GM23248 (cell line): ENCODE measurements at regions of chr4 and their contacts with region 1.

Region 1: DNA sequence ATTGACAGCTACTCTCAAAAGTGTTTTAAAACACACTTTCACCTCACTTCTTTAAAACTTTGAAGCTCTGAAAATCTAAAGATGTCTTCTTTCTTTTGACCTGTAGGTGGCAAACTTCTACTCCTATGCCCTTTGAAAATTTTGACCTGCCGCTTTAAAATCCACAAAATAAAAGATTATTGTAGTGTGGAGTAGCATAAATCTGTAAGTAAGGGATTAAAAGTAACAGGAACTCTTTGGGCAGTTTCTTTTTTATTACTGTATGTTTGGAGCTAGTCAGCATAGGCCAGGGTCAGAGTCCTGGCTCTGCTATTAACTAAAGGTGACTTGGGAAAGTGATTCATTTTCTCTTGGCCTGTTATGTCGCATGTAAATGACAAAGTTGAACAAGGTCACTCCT is 25.5 kb downstream of the BBS12 start:
- DNase-seq: peak; percentile 69
- H3K4me3 ChIP-seq: peak overlapping the region; percentile 54
- H3K27ac ChIP-seq: peak overlapping the region; percentile 36
- H3K4me1 ChIP-seq: peaks cover 50% of the 10 kb centered on the region
- H3K27me3 ChIP-seq: no peaks in the 10 kb centered on the region

Region 2: GRCh38 chr4:122329876-122330565 is 428.0 kb before region 1 on chr4:
- in situ Hi-C with region 1: no loop called
- DNase-seq: peak; percentile 58
- H3K4me3 ChIP-seq: no peak overlapping the region
- H3K27ac ChIP-seq: peak overlapping the region; percentile 70
- H3K4me1 ChIP-seq: peaks cover 12% of the 10 kb centered on the region
- H3K27me3 ChIP-seq: no peaks in the 10 kb centered on the region

Region 3: GRCh38 chr4:122854447-122855352 is 96.7 kb after region 1 on chr4:
- in situ Hi-C with region 1: no loop called
- DNase-seq: peak; percentile 58
- H3K4me3 ChIP-seq: peak overlapping the region; percentile 40
- H3K27ac ChIP-seq: peak overlapping the region; percentile 70
- H3K4me1 ChIP-seq: peaks cover 83% of the 10 kb centered on the region
- H3K27me3 ChIP-seq: no peaks in the 10 kb centered on the region

Region 4: DNA sequence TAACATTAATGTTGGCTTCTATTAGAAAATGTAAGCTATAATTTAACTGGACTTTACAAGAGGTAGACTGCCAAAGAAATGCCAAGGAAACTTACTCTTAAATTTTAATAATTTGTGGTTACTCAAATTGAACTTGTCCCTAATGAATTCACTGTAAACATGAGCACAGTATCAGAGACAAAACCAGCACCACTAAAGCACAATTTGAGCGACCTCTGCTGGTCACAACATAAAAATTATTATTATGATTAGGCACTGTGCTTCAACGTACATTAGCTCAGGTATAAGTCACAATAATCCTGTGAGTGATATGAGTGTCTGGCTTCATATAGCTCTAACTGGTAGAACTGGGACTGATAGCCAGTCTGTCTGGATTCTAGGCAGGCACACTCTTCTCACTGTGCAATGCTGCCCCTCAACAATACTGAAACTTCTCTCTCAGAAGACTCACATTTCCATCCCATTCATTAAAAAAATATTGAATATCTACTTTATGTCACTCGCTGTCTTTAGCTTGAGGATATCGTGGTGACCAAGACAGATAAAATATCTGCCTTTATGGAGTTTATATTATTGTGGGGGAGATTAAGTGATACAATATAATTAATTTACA is 156.4 kb after region 1 on chr4:
- in situ Hi-C with region 1: loop called (anchors 10 kb)
- DNase-seq: peak; percentile 67
- H3K4me3 ChIP-seq: peak overlapping the region; percentile 38; the same call in 1 of the 2 replicates
- H3K27ac ChIP-seq: peak overlapping the region; percentile 8
- H3K4me1 ChIP-seq: peaks cover 36% of the 10 kb centered on the region
- H3K27me3 ChIP-seq: no peaks in the 10 kb centered on the region